SK-N-SH (cell line): ENCODE measurements at regions of chr7 and their contacts with region 1.

Region 1: DNA sequence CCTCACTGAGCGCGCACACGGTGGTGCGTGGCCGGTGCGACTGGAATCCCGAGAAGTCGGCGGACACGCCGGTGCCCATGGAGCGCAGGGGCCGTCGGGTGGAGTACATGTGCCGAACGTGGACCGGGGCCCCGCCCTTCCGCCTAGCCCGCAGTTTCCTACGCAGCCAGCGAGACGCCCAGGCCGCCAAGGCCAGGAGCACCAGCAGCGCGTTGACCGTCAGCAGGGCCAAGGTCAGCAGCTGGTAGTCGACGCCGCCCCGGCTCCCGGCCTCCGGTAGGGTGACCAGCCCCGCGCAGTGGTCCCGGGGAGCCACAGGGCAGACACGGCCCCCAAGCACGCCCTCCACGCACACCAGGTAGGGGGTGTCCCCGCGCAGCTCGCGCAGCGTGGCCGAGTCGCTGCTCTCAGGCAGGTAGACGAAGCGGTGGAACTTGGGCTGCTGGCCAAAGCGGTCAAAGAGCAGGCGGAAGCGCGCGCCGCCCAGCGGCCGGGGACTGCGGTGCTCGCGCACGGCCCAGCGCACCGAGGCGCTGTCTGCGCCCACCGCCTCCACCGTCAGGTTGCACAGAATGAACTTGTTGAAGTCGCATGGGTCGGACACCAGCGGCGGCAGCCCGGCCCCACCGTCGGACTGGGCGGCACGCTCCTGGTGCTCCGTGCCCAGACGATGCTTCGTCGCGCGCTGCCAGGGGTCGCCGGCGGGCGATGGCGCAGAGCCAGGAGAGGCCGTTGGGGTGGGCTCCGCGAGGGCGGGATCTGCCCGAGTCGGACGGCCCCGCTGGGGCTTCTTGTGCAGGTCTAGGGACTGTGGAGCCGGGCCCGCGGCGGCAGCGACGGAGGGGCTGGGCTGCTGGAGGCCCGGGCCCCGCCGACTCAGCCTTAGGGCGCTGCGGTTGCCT is 2.2 kb downstream of the TRIL start:
- DNase-seq: peak; percentile 87
- H3K4me3 ChIP-seq: peak overlapping the region; percentile 52 to 59
- H3K27ac ChIP-seq: peak overlapping the region in 1 of 2 experiments; percentile 100; a peak in 2 of 4 replicates
- H3K4me1 ChIP-seq: peaks cover 11 to 66% of the 10 kb centered on the region in 2 experiments
- H3K27me3 ChIP-seq: peaks cover 36% of the 10 kb centered on the region
- CTCF ChIP-seq: peak; percentile 32
- EP300 ChIP-seq: no peak
- RAD21 ChIP-seq: peak; percentile 63

Region 2: GRCh38 chr7:28564755-28565374 is 391.1 kb before region 1 on chr7:
- CTCF ChIA-PET with region 1: no interaction called
- POLR2A ChIA-PET with region 1: no interaction called
- DNase-seq: no peak
- H3K4me3 ChIP-seq: no peak overlapping the region
- H3K27ac ChIP-seq: no peak overlapping the region
- H3K4me1 ChIP-seq: no peaks in the 10 kb centered on the region
- H3K27me3 ChIP-seq: no peaks in the 10 kb centered on the region
- CTCF ChIP-seq: no peak
- EP300 ChIP-seq: no peak
- RAD21 ChIP-seq: no peak

Region 3: GRCh38 chr7:28890137-28890536 is 65.8 kb before region 1 on chr7:
- CTCF ChIA-PET with region 1: no interaction called
- POLR2A ChIA-PET with region 1: no interaction called
- DNase-seq: no peak
- H3K4me3 ChIP-seq: no peak overlapping the region
- H3K27ac ChIP-seq: no peak overlapping the region
- H3K4me1 ChIP-seq: no peaks in the 10 kb centered on the region; a peak in 1 of 4 replicates
- H3K27me3 ChIP-seq: no peaks in the 10 kb centered on the region
- CTCF ChIP-seq: no peak
- EP300 ChIP-seq: no peak
- RAD21 ChIP-seq: no peak

Region 4: DNA sequence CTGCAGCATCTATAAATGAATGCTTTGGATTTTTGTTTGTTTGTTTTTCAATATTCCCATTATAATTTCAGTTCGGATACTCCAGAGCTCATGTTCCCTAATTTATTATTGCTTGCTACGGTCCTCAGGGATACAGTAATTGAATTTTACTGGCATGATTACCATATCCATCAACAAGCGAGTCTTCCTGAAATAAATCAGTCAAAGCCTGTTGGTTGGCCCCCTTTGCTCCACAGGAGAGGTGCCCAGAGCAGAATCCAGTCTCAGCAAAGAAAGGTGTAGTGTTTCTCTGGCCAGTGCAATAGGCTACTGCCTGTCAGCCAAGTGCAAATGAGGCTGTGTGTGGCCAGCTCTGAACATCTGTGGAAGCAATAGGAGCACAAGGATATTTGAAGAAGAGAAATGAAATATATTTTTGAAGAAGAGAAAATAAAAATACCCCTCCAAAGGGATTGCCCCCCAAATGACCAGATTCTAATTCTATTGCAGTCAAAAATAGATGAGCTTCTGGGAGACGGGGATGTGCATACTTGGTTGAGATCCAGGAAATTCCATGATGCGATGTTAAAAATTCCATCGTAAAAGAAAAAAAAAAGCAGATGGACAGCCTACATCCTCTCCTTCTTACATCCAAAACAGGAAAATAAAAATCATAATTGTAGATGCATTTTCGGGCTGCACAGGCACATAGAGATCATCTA is 16.0 kb before region 1 on chr7:
- CTCF ChIA-PET with region 1: interaction called, 273 read pairs
- POLR2A ChIA-PET with region 1: interaction called, 4 read pairs
- DNase-seq: peak; percentile 29
- H3K4me3 ChIP-seq: no peak overlapping the region
- H3K27ac ChIP-seq: peak overlapping the region in 1 of 2 experiments; percentile 72; a peak in 2 of 4 replicates
- H3K4me1 ChIP-seq: peaks cover 7 to 49% of the 10 kb centered on the region in 2 experiments; a peak in 3 of 4 replicates
- H3K27me3 ChIP-seq: no peaks in the 10 kb centered on the region
- CTCF ChIP-seq: no peak
- EP300 ChIP-seq: no peak
- RAD21 ChIP-seq: no peak

Region 5: DNA sequence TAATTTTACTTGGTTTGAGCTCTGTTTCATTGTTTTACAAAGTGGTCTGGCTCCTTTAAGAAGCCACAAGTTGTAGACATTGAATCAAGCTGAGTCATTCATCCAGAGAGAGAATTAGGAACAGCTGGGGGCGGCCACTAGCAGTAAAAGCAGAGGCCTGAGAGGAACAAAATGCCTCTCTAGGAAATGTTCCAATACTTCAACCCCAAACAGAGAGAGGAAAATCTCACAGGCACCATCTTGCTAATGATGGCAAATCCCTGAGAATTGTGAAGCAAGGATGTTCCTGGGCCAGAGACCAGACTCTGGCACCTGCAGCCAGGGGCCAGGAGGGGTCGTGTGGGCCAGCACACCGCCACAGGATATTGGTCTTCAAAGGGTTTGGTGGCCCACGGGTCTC is 28.7 kb after region 1 on chr7:
- CTCF ChIA-PET with region 1: interaction called, 53 read pairs
- POLR2A ChIA-PET with region 1: interaction called, 62 read pairs
- DNase-seq: peak; percentile 42
- H3K4me3 ChIP-seq: no peak overlapping the region; a peak in 1 of 4 replicates
- H3K27ac ChIP-seq: peak overlapping the region; percentile 85 to 97
- H3K4me1 ChIP-seq: peaks cover 26 to 62% of the 10 kb centered on the region in 2 experiments
- H3K27me3 ChIP-seq: no peaks in the 10 kb centered on the region
- CTCF ChIP-seq: no peak
- EP300 ChIP-seq: peak; percentile 58 to 79; a peak in 3 of 4 replicates
- RAD21 ChIP-seq: peak; percentile 21; the same call in 1 of the 2 replicates

Region 6: DNA sequence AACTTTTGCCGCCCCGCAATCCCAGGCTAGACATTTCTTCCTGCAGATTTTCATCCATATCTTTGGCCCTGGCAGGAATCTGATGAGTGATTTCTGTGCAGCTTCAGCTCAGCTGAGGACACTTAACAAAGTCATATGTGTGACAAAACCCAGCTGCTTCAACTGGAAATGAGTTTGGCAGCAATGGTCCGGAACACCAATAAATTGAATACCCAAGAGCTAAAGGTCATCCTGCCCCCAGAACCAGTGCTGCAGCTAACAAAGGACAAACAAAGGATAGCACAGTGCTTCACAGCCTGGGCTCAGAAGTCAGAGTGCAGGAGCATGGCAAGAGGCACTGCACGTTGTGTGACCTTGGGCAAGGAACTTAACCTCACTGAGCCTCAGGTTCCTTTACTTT is 42.1 kb after region 1 on chr7:
- CTCF ChIA-PET with region 1: interaction called, 18 read pairs
- POLR2A ChIA-PET with region 1: no interaction called
- DNase-seq: no peak
- H3K4me3 ChIP-seq: no peak overlapping the region
- H3K27ac ChIP-seq: peak overlapping the region in 1 of 2 experiments; percentile 26; a peak in 1 of 4 replicates
- H3K4me1 ChIP-seq: peaks cover 0 to 12% of the 10 kb centered on the region in 2 experiments; a peak in 1 of 4 replicates
- H3K27me3 ChIP-seq: no peaks in the 10 kb centered on the region; the same call in 1 of the 2 replicates
- CTCF ChIP-seq: no peak
- EP300 ChIP-seq: no peak
- RAD21 ChIP-seq: no peak

Region 7: GRCh38 chr7:29078311-29079260 is 122.6 kb after region 1 on chr7:
- CTCF ChIA-PET with region 1: interaction called, 34 read pairs
- POLR2A ChIA-PET with region 1: no interaction called
- DNase-seq: no peak
- H3K4me3 ChIP-seq: no peak overlapping the region
- H3K27ac ChIP-seq: peak overlapping the region in 1 of 2 experiments; percentile 36; a peak in 1 of 4 replicates
- H3K4me1 ChIP-seq: peaks cover 0 to 10% of the 10 kb centered on the region in 2 experiments; a peak in 2 of 4 replicates
- H3K27me3 ChIP-seq: no peaks in the 10 kb centered on the region
- CTCF ChIP-seq: no peak
- EP300 ChIP-seq: no peak
- RAD21 ChIP-seq: no peak

Region 8: DNA sequence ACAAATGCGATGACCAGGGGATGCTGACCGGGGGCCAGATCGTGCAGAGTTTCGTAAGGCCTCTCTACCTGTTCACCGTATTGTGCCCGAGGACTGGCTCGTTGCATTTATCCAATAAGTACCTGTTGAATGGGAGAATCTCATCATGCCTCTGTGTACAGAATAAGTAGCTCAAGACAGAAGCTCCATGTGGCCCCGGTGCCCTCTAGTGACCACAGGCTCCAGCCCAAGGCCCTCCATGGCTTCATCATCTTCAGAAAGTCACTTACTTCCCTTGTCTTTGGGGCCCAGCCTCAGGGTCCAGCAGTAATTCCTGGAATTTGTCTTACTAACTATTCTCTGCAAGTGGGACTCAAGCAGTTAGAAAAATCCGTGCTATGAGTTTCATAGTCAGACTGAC is 389.6 kb after region 1 on chr7:
- CTCF ChIA-PET with region 1: interaction called, 19 read pairs
- POLR2A ChIA-PET with region 1: interaction called, 3 read pairs
- DNase-seq: peak; percentile 63
- H3K4me3 ChIP-seq: no peak overlapping the region
- H3K27ac ChIP-seq: no peak overlapping the region
- H3K4me1 ChIP-seq: peaks cover 4% of the 10 kb centered on the region in 2 experiments; a peak in 1 of 4 replicates
- H3K27me3 ChIP-seq: no peaks in the 10 kb centered on the region
- CTCF ChIP-seq: peak; percentile 37
- EP300 ChIP-seq: no peak
- RAD21 ChIP-seq: peak; percentile 93

Region 9: DNA sequence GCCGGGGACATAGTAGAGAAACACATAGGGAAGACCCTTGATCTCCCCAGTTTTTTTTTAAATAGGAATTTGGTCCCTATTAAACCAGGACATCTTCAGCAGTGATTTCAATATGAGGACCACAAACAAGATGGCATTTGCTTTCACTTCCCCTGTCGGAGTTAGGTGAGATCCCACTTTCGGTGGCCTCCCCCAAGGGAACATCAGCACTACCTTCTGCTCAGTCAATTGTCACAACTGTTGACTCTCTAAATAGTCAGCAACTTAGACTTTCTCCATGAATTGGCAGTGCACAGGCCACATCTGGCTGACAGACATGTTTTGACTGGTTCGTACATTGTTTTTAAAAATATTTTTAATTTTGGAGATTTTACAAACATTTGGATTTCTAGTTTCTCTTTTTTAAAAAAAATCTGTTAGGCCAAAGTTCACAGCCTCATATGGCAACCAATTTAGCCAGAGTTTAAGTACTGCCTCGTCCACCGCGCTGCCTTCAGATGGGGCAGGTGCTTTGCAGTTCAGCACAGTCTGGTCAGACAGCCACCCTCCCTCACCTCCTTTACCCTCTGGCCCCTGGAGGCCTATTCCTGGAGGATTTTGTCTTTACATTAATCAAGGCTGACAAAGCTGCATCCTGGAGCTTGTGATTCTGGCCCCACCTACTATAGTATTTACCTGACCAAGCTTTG is 468.5 kb after region 1 on chr7:
- CTCF ChIA-PET with region 1: no interaction called
- POLR2A ChIA-PET with region 1: no interaction called
- DNase-seq: no peak
- H3K4me3 ChIP-seq: no peak overlapping the region
- H3K27ac ChIP-seq: no peak overlapping the region
- H3K4me1 ChIP-seq: no peaks in the 10 kb centered on the region
- H3K27me3 ChIP-seq: peaks cover 4% of the 10 kb centered on the region; the same call in 1 of the 2 replicates
- CTCF ChIP-seq: no peak
- EP300 ChIP-seq: no peak
- RAD21 ChIP-seq: no peak